PC-9 (cell line): ENCODE measurements at regions of chr16 and their contacts with region 1.

Region 1: GRCh38 chr16:68644715-68645493 is at the start of gene CDH3:
- DNase-seq: peak; percentile 77 to 88
- H3K4me3 ChIP-seq: peak within 1 kb of the TSS; percentile 99
- H3K27ac ChIP-seq: peak within 1 kb of the TSS; percentile 66
- H3K4me1 ChIP-seq: peaks cover 42% of the 10 kb centered on the region
- H3K27me3 ChIP-seq: no peaks in the 10 kb centered on the region
- CTCF ChIP-seq: no peak
- total RNA-seq, gene CDH3: 70.3 and 81.3 TPM in 2 replicates

Region 2: GRCh38 chr16:68658258-68659008 is 13.5 kb after region 1 on chr16:
- CTCF ChIA-PET with region 1: interaction called, 6 read pairs
- POLR2A ChIA-PET with region 1: interaction called, 10 read pairs
- intact Hi-C with region 1: no loop called
- DNase-seq: peak; percentile 78 to 94
- H3K4me3 ChIP-seq: peak overlapping the region; percentile 19; the same call in 1 of the 2 replicates
- H3K27ac ChIP-seq: peak overlapping the region; percentile 91
- H3K4me1 ChIP-seq: peaks cover 50% of the 10 kb centered on the region
- H3K27me3 ChIP-seq: no peaks in the 10 kb centered on the region
- CTCF ChIP-seq: no peak

Region 3: GRCh38 chr16:68752602-68753001 is 107.7 kb after region 1 on chr16:
- CTCF ChIA-PET with region 1: no interaction called
- POLR2A ChIA-PET with region 1: no interaction called
- intact Hi-C with region 1: no loop called
- DNase-seq: no peak
- H3K4me3 ChIP-seq: no peak overlapping the region
- H3K27ac ChIP-seq: peak overlapping the region; percentile 55
- H3K4me1 ChIP-seq: peaks cover 73% of the 10 kb centered on the region
- H3K27me3 ChIP-seq: no peaks in the 10 kb centered on the region
- CTCF ChIP-seq: no peak

Region 4: DNA sequence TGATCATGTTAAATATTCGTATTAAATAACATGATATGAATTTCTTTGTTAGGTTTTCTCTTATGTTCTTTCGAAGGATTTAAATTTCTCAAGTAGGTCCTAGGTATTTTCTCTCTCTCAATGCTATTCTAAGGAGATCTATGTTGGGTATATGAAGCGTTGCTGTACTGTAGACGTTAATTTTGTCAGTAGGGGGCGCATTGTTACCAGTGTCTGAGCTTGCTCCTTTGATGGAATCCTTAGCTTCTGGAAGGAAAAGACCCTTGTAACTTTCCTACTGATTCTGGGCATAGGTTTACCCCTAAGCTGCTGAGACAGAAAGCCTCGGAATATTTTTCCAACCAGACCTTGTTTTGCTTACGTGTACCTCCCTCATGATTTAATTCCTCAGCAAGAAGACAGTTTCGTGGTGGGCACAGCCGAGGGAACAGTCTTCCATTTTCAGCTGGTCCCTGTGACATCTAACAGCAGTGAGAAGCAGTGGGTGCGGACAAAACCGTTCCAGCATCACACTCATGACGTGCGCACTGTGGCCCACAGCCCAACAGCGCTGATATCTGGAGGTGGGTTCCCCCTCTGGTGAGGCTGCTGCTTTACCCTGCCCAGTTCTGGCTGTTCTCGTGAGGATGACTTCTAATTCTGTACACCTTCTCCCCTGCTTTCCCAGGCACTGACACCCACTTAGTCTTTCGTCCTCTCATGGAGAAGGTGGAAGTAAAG is 505.4 kb after region 1 on chr16:
- CTCF ChIA-PET with region 1: no interaction called
- POLR2A ChIA-PET with region 1: no interaction called
- intact Hi-C with region 1: no loop called
- DNase-seq: peak; percentile 34 to 53
- H3K4me3 ChIP-seq: no peak overlapping the region
- H3K27ac ChIP-seq: no peak overlapping the region
- H3K4me1 ChIP-seq: no peaks in the 10 kb centered on the region
- H3K27me3 ChIP-seq: no peaks in the 10 kb centered on the region
- CTCF ChIP-seq: peak; percentile 87

Region 5: DNA sequence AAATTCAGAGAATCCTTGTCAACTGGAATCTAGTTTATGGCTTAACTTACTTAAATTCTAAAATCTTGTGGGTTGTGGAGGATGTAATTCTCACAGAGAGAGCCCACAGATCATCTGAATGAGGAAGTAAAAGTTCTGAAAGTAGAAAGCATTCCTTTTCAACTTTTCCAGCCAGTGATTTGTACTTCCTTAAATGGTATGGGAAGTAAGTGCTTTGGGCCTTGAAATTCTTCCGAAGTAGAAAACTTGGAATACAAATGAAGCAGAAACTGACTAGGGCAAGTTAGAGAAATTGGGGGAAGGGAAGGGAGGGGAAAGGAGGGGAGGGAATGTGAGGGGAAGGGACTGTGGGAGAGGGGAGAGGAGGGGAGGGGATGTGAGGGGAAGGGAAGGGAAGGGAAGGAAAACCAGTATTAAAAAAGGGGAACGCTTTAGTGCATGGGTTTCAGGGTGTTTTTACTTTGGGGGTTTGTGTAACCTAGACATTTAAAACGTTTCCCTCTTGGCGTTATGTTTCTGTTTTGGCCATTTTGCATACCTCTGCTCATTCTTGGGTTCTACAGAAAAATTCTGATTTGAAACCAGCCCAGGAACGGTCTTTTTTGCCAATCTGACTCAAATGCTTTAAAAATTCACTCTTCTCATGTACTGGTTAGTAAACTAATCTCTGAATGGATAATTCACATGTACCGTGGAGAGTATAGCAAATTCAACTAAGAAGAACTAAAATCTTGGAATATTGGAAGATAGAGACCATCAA is 526.6 kb after region 1 on chr16:
- CTCF ChIA-PET with region 1: no interaction called
- POLR2A ChIA-PET with region 1: interaction called, 13 read pairs
- intact Hi-C with region 1: no loop called
- DNase-seq: no peak
- H3K4me3 ChIP-seq: no peak overlapping the region
- H3K27ac ChIP-seq: no peak overlapping the region
- H3K4me1 ChIP-seq: peaks cover 17% of the 10 kb centered on the region
- H3K27me3 ChIP-seq: no peaks in the 10 kb centered on the region
- CTCF ChIP-seq: no peak